Heart right ventricle (tissue), 16 donors: ENCODE measurements at regions of chr1 and their contacts with region 1.

Region 1: GRCh38 chr1:172745014-172745413 is 86.1 kb downstream of the FASLG start:
- DNase-seq: peak in 1 of 2 donors; percentile 33
- ATAC-seq: peak in 7 of 8 donors; percentile 56 to 81 (median 77)
- H3K4me3 ChIP-seq: no peak overlapping the region
- H3K27ac ChIP-seq: no peak overlapping the region
- H3K4me1 ChIP-seq: peaks cover 0 to 26% (median 5%) of the 10 kb centered on the region in 9 donors
- H3K27me3 ChIP-seq: peaks cover 0 to 11% (median 0%) of the 10 kb centered on the region in 7 donors
- CTCF ChIP-seq: peak in 8 of 9 donors; percentile 20 to 73 (median 58)

Region 2: GRCh38 chr1:172561252-172561651 is 183.8 kb before region 1 on chr1:
- intact Hi-C with region 1: no loop called
- DNase-seq: no peak
- ATAC-seq: no peak
- H3K4me3 ChIP-seq: no peak overlapping the region
- H3K27ac ChIP-seq: no peak overlapping the region
- H3K4me1 ChIP-seq: no peaks in the 10 kb centered on the region
- H3K27me3 ChIP-seq: no peaks in the 10 kb centered on the region
- CTCF ChIP-seq: no peak

Region 3: GRCh38 chr1:172662464-172663109 is 82.4 kb before region 1 on chr1:
- intact Hi-C with region 1: no loop called
- DNase-seq: peak in 1 of 2 donors; percentile 39
- ATAC-seq: peak in 3 of 8 donors; percentile 30 to 67 (median 37)
- H3K4me3 ChIP-seq: peak overlapping the region in 1 of 10 donors; percentile 41
- H3K27ac ChIP-seq: peak overlapping the region in 1 of 10 donors; percentile 18
- H3K4me1 ChIP-seq: peaks cover 0 to 10% (median 0%) of the 10 kb centered on the region in 9 donors
- H3K27me3 ChIP-seq: no peaks in the 10 kb centered on the region
- CTCF ChIP-seq: no peak

Region 4: DNA sequence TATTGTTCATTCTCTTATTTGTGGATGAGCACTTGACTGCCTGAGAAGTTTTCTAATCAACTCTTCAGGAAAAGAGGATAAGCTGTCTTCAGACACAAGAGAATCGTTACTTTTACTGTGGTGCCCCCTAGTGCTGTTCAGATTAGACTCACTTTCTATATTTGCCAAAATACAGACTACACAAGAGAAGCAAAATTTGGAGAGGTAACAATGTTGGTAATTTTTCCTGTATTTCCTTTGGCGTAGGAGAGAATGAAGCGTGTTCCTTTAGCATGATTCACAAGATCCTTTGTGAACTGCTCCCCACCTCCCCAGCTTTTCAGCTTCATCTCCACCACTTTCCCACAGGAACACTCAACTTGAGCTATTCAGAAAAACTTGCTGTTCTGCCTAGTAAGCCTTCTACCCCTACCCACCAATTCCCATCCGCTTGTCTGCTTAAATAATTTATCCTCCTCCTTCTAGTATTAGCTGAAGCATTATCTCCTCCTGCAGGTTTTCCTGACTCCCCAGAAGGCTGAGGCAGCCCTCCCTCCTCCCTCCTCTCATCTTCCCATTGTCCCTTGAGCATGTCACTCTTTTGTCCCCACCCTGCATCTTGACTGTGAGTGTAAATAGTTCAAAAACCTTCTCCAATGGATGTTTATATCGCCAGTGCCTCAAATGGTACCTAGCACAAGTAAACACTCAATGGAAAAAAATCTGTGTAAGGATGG is 457.6 kb after region 1 on chr1:
- intact Hi-C with region 1: loop called in 9 of 10 experiments (anchors 2 to 5 kb)
- DNase-seq: peak in 1 of 2 donors; percentile 56
- ATAC-seq: peak in 7 of 8 donors; percentile 66 to 79 (median 74)
- H3K4me3 ChIP-seq: no peak overlapping the region
- H3K27ac ChIP-seq: no peak overlapping the region
- H3K4me1 ChIP-seq: peaks cover 0 to 36% (median 12%) of the 10 kb centered on the region in 9 donors
- H3K27me3 ChIP-seq: no peaks in the 10 kb centered on the region
- CTCF ChIP-seq: peak; percentile 23 to 79 (median 69)

Region 5: GRCh38 chr1:173409613-173410012 is 664.6 kb after region 1 on chr1:
- intact Hi-C with region 1: loop called in 2 of 10 experiments (anchors 10 kb)
- DNase-seq: peak; percentile 37 to 42
- ATAC-seq: peak in 5 of 8 donors; percentile 63 to 75 (median 66)
- H3K4me3 ChIP-seq: no peak overlapping the region
- H3K27ac ChIP-seq: no peak overlapping the region
- H3K4me1 ChIP-seq: peaks cover 0 to 51% (median 26%) of the 10 kb centered on the region in 9 donors
- H3K27me3 ChIP-seq: no peaks in the 10 kb centered on the region
- CTCF ChIP-seq: no peak

Region 6: GRCh38 chr1:173420330-173420806 is 675.4 kb after region 1 on chr1:
- intact Hi-C with region 1: loop called in 5 of 10 experiments (anchors 2 to 10 kb)
- DNase-seq: peak; percentile 23 to 54
- ATAC-seq: peak; percentile 84 to 93 (median 88)
- H3K4me3 ChIP-seq: peak overlapping the region in 1 of 10 donors; percentile 20
- H3K27ac ChIP-seq: peak overlapping the region in 1 of 10 donors; percentile 30
- H3K4me1 ChIP-seq: peaks cover 0 to 27% (median 3%) of the 10 kb centered on the region in 9 donors
- H3K27me3 ChIP-seq: no peaks in the 10 kb centered on the region
- CTCF ChIP-seq: peak; percentile 84 to 93 (median 91)